ENCODE measurements at regions of chrX and their contacts with region 1.

Region 1: DNA sequence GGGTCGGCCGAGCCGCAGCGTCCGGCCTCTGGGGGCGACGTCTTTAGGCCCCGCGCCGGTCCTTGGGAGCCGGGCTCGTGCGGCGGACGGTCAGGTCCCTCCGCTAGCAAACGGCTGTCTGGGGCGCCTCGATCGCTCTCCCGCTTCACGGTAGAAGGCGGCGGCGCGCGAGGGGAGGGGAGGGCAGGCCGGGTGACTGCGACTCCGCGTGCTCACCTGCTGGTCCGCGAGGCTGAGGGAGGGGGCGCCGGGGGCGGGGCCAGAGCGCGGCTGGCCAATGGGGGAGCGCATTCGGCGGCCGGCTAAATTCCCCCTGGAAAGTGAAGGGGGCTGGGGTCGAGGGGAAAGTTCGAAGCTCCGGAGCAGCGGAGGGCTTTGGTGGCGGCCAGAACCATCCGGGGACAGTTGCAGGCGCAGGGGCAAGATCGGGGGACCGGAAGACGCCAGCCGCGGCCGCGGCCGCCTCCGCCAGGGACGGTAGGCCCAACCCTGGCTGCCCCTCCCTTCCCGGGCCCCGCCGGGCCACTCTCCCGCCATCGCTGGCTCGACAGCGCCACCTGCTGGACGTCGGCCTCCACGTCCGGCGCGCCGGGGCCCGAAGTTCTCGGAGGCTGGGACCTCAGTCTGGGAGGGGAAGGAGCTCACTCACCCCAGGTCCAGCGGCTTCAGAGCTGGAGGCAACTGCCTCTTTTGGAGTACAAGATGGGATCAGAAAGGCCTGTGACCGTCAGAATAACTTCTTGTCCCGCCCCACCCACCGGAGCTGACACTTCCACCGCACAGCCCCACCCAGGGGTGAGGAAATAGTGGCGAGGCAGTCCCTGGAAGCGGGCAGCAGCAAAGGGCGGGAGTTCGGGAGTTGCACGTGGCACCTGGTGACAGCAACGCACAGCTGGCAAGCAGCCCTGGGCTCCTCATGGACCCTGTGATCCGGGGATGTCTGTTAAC is 49.9 kb downstream of the ELF4 start:
- DNase-seq: peak; percentile 89 to 93 (median 92)
- ATAC-seq: peak; percentile 94
- H3K4me3 ChIP-seq: peak overlapping the region; percentile 42
- H3K27ac ChIP-seq: peak overlapping the region; percentile 87
- H3K4me1 ChIP-seq: peaks cover 2 to 23% of the 10 kb centered on the region in 2 experiments; a peak in 4 of 5 replicates
- H3K27me3 ChIP-seq: no peaks in the 10 kb centered on the region
- CTCF ChIP-seq: peak; percentile 86 to 90 (median 89)
- EP300 ChIP-seq: no peak
- POLR2A ChIP-seq: no peak; the same call in 1 of the 2 replicates
- RAD21 ChIP-seq: peak; percentile 91 to 92

Region 2: GRCh38 chrX:129637217-129638109 is 422.9 kb before region 1 on chrX:
- CTCF ChIA-PET with region 1: interaction called, 10 read pairs
- POLR2A ChIA-PET with region 1: no interaction called
- in situ Hi-C with region 1: no loop called
- intact Hi-C with region 1: no loop called
- DNase-seq: peak; percentile 60 to 81 (median 67)
- ATAC-seq: peak; percentile 80
- H3K4me3 ChIP-seq: no peak overlapping the region
- H3K27ac ChIP-seq: no peak overlapping the region
- H3K4me1 ChIP-seq: peaks cover 14 to 19% of the 10 kb centered on the region in 2 experiments
- H3K27me3 ChIP-seq: peaks cover 0 to 4% of the 10 kb centered on the region in 2 experiments; a peak in 2 of 5 replicates
- CTCF ChIP-seq: peak; percentile 77 to 91 (median 86)
- EP300 ChIP-seq: no peak
- POLR2A ChIP-seq: no peak
- RAD21 ChIP-seq: peak; percentile 45 to 74; a peak in 3 of 4 replicates

Region 3: GRCh38 chrX:129759576-129760061 is 300.8 kb before region 1 on chrX:
- CTCF ChIA-PET with region 1: no interaction called
- POLR2A ChIA-PET with region 1: no interaction called
- in situ Hi-C with region 1: no loop called
- intact Hi-C with region 1: loop called (anchors 5 kb)
- DNase-seq: peak in 3 of 4 experiments; percentile 18 to 62 (median 38)
- ATAC-seq: peak; percentile 87
- H3K4me3 ChIP-seq: no peak overlapping the region
- H3K27ac ChIP-seq: peak overlapping the region; percentile 30; the same call in 1 of the 3 replicates
- H3K4me1 ChIP-seq: peaks cover 12 to 17% of the 10 kb centered on the region in 2 experiments; a peak in 4 of 5 replicates
- H3K27me3 ChIP-seq: no peaks in the 10 kb centered on the region
- CTCF ChIP-seq: peak; percentile 34 to 51 (median 41); a peak in 5 of 6 replicates
- EP300 ChIP-seq: no peak
- POLR2A ChIP-seq: no peak
- RAD21 ChIP-seq: peak; percentile 61; a peak in 3 of 4 replicates

Region 4: GRCh38 chrX:129925305-129926092 is 134.9 kb before region 1 on chrX:
- CTCF ChIA-PET with region 1: interaction called, 23 read pairs
- POLR2A ChIA-PET with region 1: interaction called, 6 read pairs
- in situ Hi-C with region 1: loop called (anchors 10 kb)
- intact Hi-C with region 1: loop called (anchors 1 kb)
- DNase-seq: peak; percentile 36 to 75 (median 50)
- ATAC-seq: peak; percentile 90
- H3K4me3 ChIP-seq: no peak overlapping the region
- H3K27ac ChIP-seq: no peak overlapping the region
- H3K4me1 ChIP-seq: no peaks in the 10 kb centered on the region
- H3K27me3 ChIP-seq: no peaks in the 10 kb centered on the region
- CTCF ChIP-seq: peak; percentile 59 to 78 (median 70)
- EP300 ChIP-seq: no peak
- POLR2A ChIP-seq: 0 out of 2 replicates have a peak, but pooled peaks have one; percentile 19
- RAD21 ChIP-seq: peak; percentile 80

Region 5: DNA sequence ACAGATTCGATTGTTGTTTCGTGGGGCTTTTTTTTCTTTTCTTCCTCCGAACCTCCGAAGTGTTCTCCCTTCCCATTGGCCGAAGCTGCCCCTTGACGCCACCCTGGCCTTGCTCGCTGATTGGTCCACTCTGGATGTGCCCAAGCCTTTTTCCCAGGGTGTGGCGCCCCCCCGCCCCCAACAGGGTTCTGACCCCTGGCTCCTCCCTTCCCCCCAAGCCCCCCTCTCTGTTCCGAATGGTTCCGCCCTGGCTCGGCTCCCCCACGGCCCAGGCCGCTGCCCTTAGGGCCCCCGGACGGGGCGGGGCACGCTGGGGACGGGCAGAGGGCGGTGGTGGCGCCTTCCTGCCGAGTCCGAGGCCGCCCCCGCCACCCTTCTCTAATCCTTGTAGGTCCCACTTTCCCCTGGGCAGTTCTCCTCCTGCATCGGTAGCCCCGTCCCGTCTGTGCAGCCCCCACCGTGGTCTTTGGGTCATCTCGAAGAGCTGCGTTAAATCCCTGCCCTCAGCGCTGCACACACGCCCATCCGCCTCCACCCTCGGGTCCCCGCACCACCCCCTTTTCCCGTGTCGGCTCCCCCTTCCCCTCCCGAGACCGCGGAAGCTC is 128.9 kb before region 1 on chrX:
- CTCF ChIA-PET with region 1: interaction called, 23 read pairs
- POLR2A ChIA-PET with region 1: no interaction called
- in situ Hi-C with region 1: loop called (anchors 10 kb)
- intact Hi-C with region 1: loop called (anchors 1 kb)
- DNase-seq: peak; percentile 90 to 94 (median 92)
- ATAC-seq: peak; percentile 90
- H3K4me3 ChIP-seq: peak overlapping the region; percentile 65
- H3K27ac ChIP-seq: peak overlapping the region; percentile 82
- H3K4me1 ChIP-seq: peaks cover 4 to 19% of the 10 kb centered on the region in 2 experiments; a peak in 3 of 5 replicates
- H3K27me3 ChIP-seq: no peaks in the 10 kb centered on the region
- CTCF ChIP-seq: no peak
- EP300 ChIP-seq: no peak
- POLR2A ChIP-seq: peak; percentile 67
- RAD21 ChIP-seq: no peak

Region 6: GRCh38 chrX:131677655-131678628 is 1617.5 kb after region 1 on chrX:
- CTCF ChIA-PET with region 1: no interaction called
- POLR2A ChIA-PET with region 1: no interaction called
- in situ Hi-C with region 1: no loop called
- intact Hi-C with region 1: loop called (anchors 5 kb)
- DNase-seq: peak; percentile 50 to 74 (median 70)
- ATAC-seq: peak; percentile 87
- H3K4me3 ChIP-seq: no peak overlapping the region
- H3K27ac ChIP-seq: no peak overlapping the region
- H3K4me1 ChIP-seq: no peaks in the 10 kb centered on the region
- H3K27me3 ChIP-seq: no peaks in the 10 kb centered on the region; a peak in 1 of 5 replicates
- CTCF ChIP-seq: peak; percentile 68 to 74 (median 74)
- EP300 ChIP-seq: no peak
- POLR2A ChIP-seq: no peak
- RAD21 ChIP-seq: peak; percentile 40 to 67

Region 7: DNA sequence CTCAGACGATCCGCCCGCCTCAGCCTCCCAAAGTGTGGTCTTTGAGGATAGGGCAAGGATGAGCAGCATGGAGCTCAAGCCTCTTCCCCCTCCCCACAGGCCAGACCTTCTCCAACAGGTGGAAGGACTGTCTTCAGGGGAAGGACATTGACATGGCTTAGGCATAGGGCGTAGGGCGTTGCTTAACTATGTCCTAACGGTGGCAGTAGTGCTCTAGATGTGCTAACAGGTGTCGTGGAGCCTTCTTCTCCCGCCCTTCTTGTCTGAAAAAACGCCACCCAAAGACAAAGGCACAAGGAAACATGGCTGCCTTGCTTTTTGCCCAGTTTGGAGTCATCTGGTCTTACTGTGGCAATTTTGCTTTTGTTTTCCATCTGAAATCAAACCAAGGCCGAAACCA is 1703.3 kb after region 1 on chrX:
- CTCF ChIA-PET with region 1: no interaction called
- POLR2A ChIA-PET with region 1: no interaction called
- in situ Hi-C with region 1: no loop called
- intact Hi-C with region 1: loop called (anchors 5 kb)
- DNase-seq: peak in 1 of 4 experiments; percentile 5
- ATAC-seq: 0 out of 3 replicates have a peak, but pooled peaks have one; percentile 37
- H3K4me3 ChIP-seq: no peak overlapping the region
- H3K27ac ChIP-seq: no peak overlapping the region
- H3K4me1 ChIP-seq: no peaks in the 10 kb centered on the region; a peak in 1 of 5 replicates
- H3K27me3 ChIP-seq: no peaks in the 10 kb centered on the region
- CTCF ChIP-seq: no peak
- EP300 ChIP-seq: no peak
- POLR2A ChIP-seq: no peak
- RAD21 ChIP-seq: no peak